ENCODE measurements at regions of chr13 and their contacts with region 1.

Region 1: GRCh38 chr13:25574437-25575411 is 202.9 kb downstream of the ATP8A2 start:
- H3K4me3 Mint-ChIP-seq: no peak overlapping the region
- H3K27ac Mint-ChIP-seq: no peak overlapping the region
- H3K4me1 Mint-ChIP-seq: no peaks in the 10 kb centered on the region
- H3K27me3 Mint-ChIP-seq: peaks cover 7% of the 10 kb centered on the region

Region 2: GRCh38 chr13:25561812-25562211 is 12.9 kb before region 1 on chr13:
- intact Hi-C with region 1: no loop called
- H3K4me3 Mint-ChIP-seq: no peak overlapping the region
- H3K27ac Mint-ChIP-seq: no peak overlapping the region
- H3K4me1 Mint-ChIP-seq: no peaks in the 10 kb centered on the region
- H3K27me3 Mint-ChIP-seq: no peaks in the 10 kb centered on the region

Region 3: GRCh38 chr13:26062844-26063444 is 488.2 kb after region 1 on chr13:
- intact Hi-C with region 1: loop called (anchors 5 kb)
- H3K4me3 Mint-ChIP-seq: no peak overlapping the region
- H3K27ac Mint-ChIP-seq: no peak overlapping the region
- H3K4me1 Mint-ChIP-seq: no peaks in the 10 kb centered on the region
- H3K27me3 Mint-ChIP-seq: peaks cover 6% of the 10 kb centered on the region

Region 4: GRCh38 chr13:26071691-26072090 is 497.0 kb after region 1 on chr13:
- intact Hi-C with region 1: loop called (anchors 2 kb)
- H3K4me3 Mint-ChIP-seq: no peak overlapping the region
- H3K27ac Mint-ChIP-seq: no peak overlapping the region
- H3K4me1 Mint-ChIP-seq: no peaks in the 10 kb centered on the region
- H3K27me3 Mint-ChIP-seq: peaks cover 17% of the 10 kb centered on the region

Measured in dendritic cell treated with granulocyte-macrophage colony-stimulating factor and Interleukin-4, amounts not matched to agents 40 ng/mL and 50 ng/mL, for 4 days (primary cell).